Heart left ventricle (tissue), 16 donors: ENCODE measurements at regions of chr15 and their contacts with region 1.

Region 1: DNA sequence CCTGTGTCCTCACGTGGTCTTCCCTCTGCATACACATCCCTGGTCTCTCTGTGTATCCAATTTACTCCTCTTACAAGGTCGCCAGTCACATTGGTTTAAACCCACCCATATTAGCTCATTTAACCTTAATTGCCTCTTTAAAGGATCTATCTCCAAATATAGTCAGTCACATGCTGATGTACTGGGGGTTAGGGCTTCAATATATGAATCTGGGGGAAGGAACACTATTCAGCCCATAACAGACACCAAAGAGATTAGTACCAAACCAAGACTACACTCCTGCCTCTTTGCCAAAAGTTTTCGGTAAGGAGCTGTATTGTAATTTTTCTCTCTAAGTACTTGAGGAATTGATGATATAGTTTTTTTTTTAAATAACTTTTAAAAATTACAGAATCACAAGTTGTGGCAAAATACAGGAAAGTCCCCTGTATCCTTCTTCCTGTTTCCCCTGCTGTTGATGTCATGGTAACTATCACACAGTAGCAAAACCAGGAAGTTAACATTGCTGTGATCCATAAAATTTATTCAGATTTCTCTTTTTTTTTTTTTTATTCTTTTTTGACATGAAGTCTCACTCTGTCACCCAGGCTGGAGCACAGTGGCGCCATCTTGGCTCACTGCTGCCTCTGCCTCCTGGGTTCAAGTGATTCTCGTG is 67.8 kb downstream of the SLCO3A1 start:
- DNase-seq: no peak
- ATAC-seq: peak in 1 of 4 donors; percentile 36
- H3K4me3 ChIP-seq: peak overlapping the region in 3 of 12 donors; percentile 4 to 30 (median 25)
- H3K27ac ChIP-seq: peak overlapping the region in 11 of 12 donors; percentile 43 to 87 (median 62)
- H3K4me1 ChIP-seq: peaks cover 9 to 92% (median 81%) of the 10 kb centered on the region in 12 donors
- H3K27me3 ChIP-seq: no peaks in the 10 kb centered on the region
- CTCF ChIP-seq: no peak
- POLR2A ChIP-seq: no peak

Region 2: GRCh38 chr15:91782221-91782620 is 139.1 kb before region 1 on chr15:
- intact Hi-C with region 1: no loop called
- DNase-seq: no peak
- ATAC-seq: no peak
- H3K4me3 ChIP-seq: no peak overlapping the region
- H3K27ac ChIP-seq: peak overlapping the region in 7 of 12 donors; percentile 22 to 79 (median 62)
- H3K4me1 ChIP-seq: peaks cover 0 to 32% (median 1%) of the 10 kb centered on the region in 12 donors
- H3K27me3 ChIP-seq: peaks cover 0 to 7% (median 0%) of the 10 kb centered on the region in 9 donors
- CTCF ChIP-seq: no peak
- POLR2A ChIP-seq: no peak

Region 3: GRCh38 chr15:91874992-91875660 is 46.2 kb before region 1 on chr15:
- intact Hi-C with region 1: loop called in 1 of 10 experiments (anchors 5 kb)
- DNase-seq: no peak
- ATAC-seq: peak in 2 of 4 donors; percentile 23 to 51
- H3K4me3 ChIP-seq: no peak overlapping the region
- H3K27ac ChIP-seq: no peak overlapping the region
- H3K4me1 ChIP-seq: peaks cover 0 to 40% (median 19%) of the 10 kb centered on the region in 12 donors
- H3K27me3 ChIP-seq: no peaks in the 10 kb centered on the region
- CTCF ChIP-seq: no peak
- POLR2A ChIP-seq: no peak

Region 4: GRCh38 chr15:91885714-91886270 is 35.5 kb before region 1 on chr15:
- intact Hi-C with region 1: loop called in 2 of 10 experiments (anchors 5 kb)
- DNase-seq: no peak
- ATAC-seq: peak in 3 of 4 donors; percentile 14 to 29 (median 22)
- H3K4me3 ChIP-seq: no peak overlapping the region
- H3K27ac ChIP-seq: no peak overlapping the region
- H3K4me1 ChIP-seq: peaks cover 3 to 83% (median 46%) of the 10 kb centered on the region in 12 donors
- H3K27me3 ChIP-seq: no peaks in the 10 kb centered on the region
- CTCF ChIP-seq: peak in 8 of 12 donors; percentile 14 to 42 (median 26)
- POLR2A ChIP-seq: no peak

Region 5: GRCh38 chr15:91897585-91898372 is 23.5 kb before region 1 on chr15:
- intact Hi-C with region 1: loop called in 1 of 10 experiments (anchors 2 kb)
- DNase-seq: peak in 2 of 5 donors; percentile 57 to 63
- ATAC-seq: peak; percentile 94 to 95 (median 94)
- H3K4me3 ChIP-seq: no peak overlapping the region
- H3K27ac ChIP-seq: peak overlapping the region in 11 of 12 donors; percentile 8 to 78 (median 47)
- H3K4me1 ChIP-seq: peaks cover 0 to 64% (median 25%) of the 10 kb centered on the region in 12 donors
- H3K27me3 ChIP-seq: no peaks in the 10 kb centered on the region
- CTCF ChIP-seq: no peak
- POLR2A ChIP-seq: no peak

Region 6: GRCh38 chr15:91908391-91908790 is 12.9 kb before region 1 on chr15:
- intact Hi-C with region 1: no loop called
- DNase-seq: no peak
- ATAC-seq: no peak
- H3K4me3 ChIP-seq: no peak overlapping the region
- H3K27ac ChIP-seq: no peak overlapping the region
- H3K4me1 ChIP-seq: peaks cover 0 to 47% (median 14%) of the 10 kb centered on the region in 12 donors
- H3K27me3 ChIP-seq: no peaks in the 10 kb centered on the region
- CTCF ChIP-seq: no peak
- POLR2A ChIP-seq: no peak